ENCODE measurements at regions of chr6 and their contacts with region 1.

Region 1: GRCh38 chr6:30533460-30534294 is 22.6 kb downstream of the GNL1 start:
- DNase-seq: peak in 2 of 14 experiments; percentile 56 to 76
- ATAC-seq: no peak
- H3K4me3 ChIP-seq: peak overlapping the region; percentile 29
- H3K4me3 Mint-ChIP-seq: peak overlapping the region; percentile 90
- H3K27ac ChIP-seq: no peak overlapping the region
- H3K27ac Mint-ChIP-seq: peak overlapping the region; percentile 79
- H3K4me1 ChIP-seq: peaks cover 40% of the 10 kb centered on the region
- H3K4me1 Mint-ChIP-seq: peaks cover 41% of the 10 kb centered on the region
- H3K27me3 ChIP-seq: no peaks in the 10 kb centered on the region
- H3K27me3 Mint-ChIP-seq: no peaks in the 10 kb centered on the region
- CTCF ChIP-seq: no peak

Region 2: GRCh38 chr6:30500421-30501355 is 33.0 kb before region 1 on chr6:
- CTCF ChIA-PET with region 1: interaction called, 5 read pairs
- POLR2A ChIA-PET with region 1: interaction called, 120 read pairs
- intact Hi-C with region 1: loop called in 1 of 2 experiments (anchors 2 kb)
- DNase-seq: peak in 2 of 14 experiments; percentile 37 to 45
- ATAC-seq: peak; percentile 55
- H3K4me3 ChIP-seq: peak overlapping the region; percentile 35
- H3K4me3 Mint-ChIP-seq: peak overlapping the region; percentile 57
- H3K27ac ChIP-seq: peak overlapping the region in 1 of 2 donors; percentile 10
- H3K27ac Mint-ChIP-seq: peak overlapping the region; percentile 75
- H3K4me1 ChIP-seq: peaks cover 29% of the 10 kb centered on the region
- H3K4me1 Mint-ChIP-seq: peaks cover 40% of the 10 kb centered on the region
- H3K27me3 ChIP-seq: no peaks in the 10 kb centered on the region
- H3K27me3 Mint-ChIP-seq: no peaks in the 10 kb centered on the region
- CTCF ChIP-seq: no peak

Region 3: DNA sequence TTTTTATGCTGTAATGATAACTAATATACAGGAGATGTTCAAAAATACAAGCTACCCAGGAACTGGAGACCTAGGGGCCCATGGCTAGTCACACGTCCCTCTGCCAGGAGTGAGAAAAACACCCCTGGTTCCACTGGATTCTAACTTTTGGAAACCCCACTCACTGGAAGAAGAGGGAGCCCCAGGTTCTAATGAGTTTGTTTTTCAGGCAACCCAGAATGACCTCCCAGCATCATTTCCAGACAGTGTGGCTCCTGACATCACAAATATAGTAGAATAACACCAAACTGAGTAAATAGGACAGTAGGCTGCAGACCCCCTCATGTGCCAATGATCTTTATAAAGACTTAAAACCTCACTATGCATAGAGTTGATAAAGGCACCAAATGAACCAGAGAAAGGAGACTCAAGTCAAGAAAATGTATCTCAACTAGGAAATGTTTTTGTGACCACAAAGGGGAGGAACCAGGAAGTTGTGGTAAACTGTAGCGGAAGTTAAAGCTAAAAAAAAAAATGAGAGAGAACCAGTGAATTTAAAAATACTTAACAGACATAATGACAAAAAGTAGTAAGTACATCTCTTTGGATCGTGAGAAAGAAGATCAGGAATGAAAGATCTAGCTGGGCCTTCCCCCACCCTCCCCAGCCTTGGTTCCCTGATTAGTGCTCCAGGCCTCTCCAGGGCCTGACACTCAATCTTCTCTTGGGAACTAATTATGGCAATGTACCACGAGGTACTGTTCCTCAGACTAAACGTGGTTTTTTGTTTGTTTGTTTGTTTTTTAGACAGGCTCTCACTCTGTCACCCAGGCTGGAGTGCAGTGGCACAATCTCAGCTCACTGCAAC is 24.6 kb before region 1 on chr6:
- CTCF ChIA-PET with region 1: interaction called, 33 read pairs
- POLR2A ChIA-PET with region 1: interaction called, 56 read pairs
- intact Hi-C with region 1: no loop called
- DNase-seq: peak in 3 of 14 experiments; percentile 84 to 88 (median 86)
- ATAC-seq: peak; percentile 85
- H3K4me3 ChIP-seq: peak overlapping the region; percentile 36
- H3K4me3 Mint-ChIP-seq: peak overlapping the region; percentile 72
- H3K27ac ChIP-seq: peak overlapping the region; percentile 47 to 65
- H3K27ac Mint-ChIP-seq: peak overlapping the region; percentile 79
- H3K4me1 ChIP-seq: peaks cover 75% of the 10 kb centered on the region
- H3K4me1 Mint-ChIP-seq: peaks cover 62% of the 10 kb centered on the region
- H3K27me3 ChIP-seq: no peaks in the 10 kb centered on the region
- H3K27me3 Mint-ChIP-seq: no peaks in the 10 kb centered on the region
- CTCF ChIP-seq: no peak

Region 4: GRCh38 chr6:30515932-30516753 is 17.5 kb before region 1 on chr6:
- CTCF ChIA-PET with region 1: interaction called, 33 read pairs
- POLR2A ChIA-PET with region 1: interaction called, 56 read pairs
- intact Hi-C with region 1: loop called (anchors 2 kb)
- DNase-seq: peak; percentile 78 to 98 (median 87)
- ATAC-seq: peak; percentile 84
- H3K4me3 ChIP-seq: peak overlapping the region; percentile 55
- H3K4me3 Mint-ChIP-seq: peak overlapping the region; percentile 89
- H3K27ac ChIP-seq: peak overlapping the region; percentile 92 to 98
- H3K27ac Mint-ChIP-seq: peak overlapping the region; percentile 99
- H3K4me1 ChIP-seq: peaks cover 83% of the 10 kb centered on the region
- H3K4me1 Mint-ChIP-seq: peaks cover 69% of the 10 kb centered on the region
- H3K27me3 ChIP-seq: no peaks in the 10 kb centered on the region
- H3K27me3 Mint-ChIP-seq: no peaks in the 10 kb centered on the region
- CTCF ChIP-seq: no peak

Region 5: GRCh38 chr6:31020057-31020456 is 486.4 kb after region 1 on chr6:
- CTCF ChIA-PET with region 1: no interaction called
- POLR2A ChIA-PET with region 1: no interaction called
- intact Hi-C with region 1: no loop called
- DNase-seq: no peak
- ATAC-seq: no peak
- H3K4me3 ChIP-seq: no peak overlapping the region
- H3K4me3 Mint-ChIP-seq: no peak overlapping the region
- H3K27ac ChIP-seq: no peak overlapping the region
- H3K27ac Mint-ChIP-seq: no peak overlapping the region
- H3K4me1 ChIP-seq: no peaks in the 10 kb centered on the region
- H3K4me1 Mint-ChIP-seq: no peaks in the 10 kb centered on the region
- H3K27me3 ChIP-seq: no peaks in the 10 kb centered on the region
- H3K27me3 Mint-ChIP-seq: peaks cover 9% of the 10 kb centered on the region
- CTCF ChIP-seq: no peak

Measured in CD4-positive, alpha-beta T cell (primary cell).